Tibial artery (tissue), 4 donors: ENCODE measurements at regions of chr20 and their contacts with region 1.

Region 1: GRCh38 chr20:1965520-1966351 is 28.1 kb downstream of the PDYN start:
- DNase-seq: peak; percentile 71 to 82
- H3K4me3 ChIP-seq: no peak overlapping the region
- H3K27ac ChIP-seq: no peak overlapping the region
- H3K4me1 ChIP-seq: peaks cover 0 to 11% (median 3%) of the 10 kb centered on the region in 4 donors
- H3K27me3 ChIP-seq: peaks cover 0 to 40% of the 10 kb centered on the region in 2 donors
- CTCF ChIP-seq: peak; percentile 84 to 89

Region 2: DNA sequence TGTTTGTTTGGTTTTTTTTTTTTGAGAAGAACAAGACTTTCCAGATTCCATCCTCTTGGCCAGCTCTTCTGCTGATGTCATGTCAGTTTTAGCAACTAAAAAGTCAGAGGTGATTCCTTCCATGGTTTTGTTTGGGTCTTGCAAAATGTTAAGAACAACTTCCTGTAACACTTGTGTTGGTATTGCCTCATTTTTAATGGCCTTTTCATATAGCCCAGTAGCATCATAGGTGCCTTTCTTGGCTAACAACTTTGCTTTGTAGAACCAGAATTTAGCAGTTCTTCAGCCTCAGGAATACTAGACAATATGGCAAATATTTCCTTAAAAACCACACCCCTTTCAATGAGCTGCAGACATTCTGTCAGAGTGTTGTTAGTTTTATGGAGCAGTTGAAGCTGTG is 208.7 kb before region 1 on chr20:
- intact Hi-C with region 1: no loop called
- DNase-seq: no peak
- H3K4me3 ChIP-seq: no peak overlapping the region
- H3K27ac ChIP-seq: no peak overlapping the region
- H3K4me1 ChIP-seq: no peaks in the 10 kb centered on the region
- H3K27me3 ChIP-seq: no peaks in the 10 kb centered on the region
- CTCF ChIP-seq: no peak

Region 3: DNA sequence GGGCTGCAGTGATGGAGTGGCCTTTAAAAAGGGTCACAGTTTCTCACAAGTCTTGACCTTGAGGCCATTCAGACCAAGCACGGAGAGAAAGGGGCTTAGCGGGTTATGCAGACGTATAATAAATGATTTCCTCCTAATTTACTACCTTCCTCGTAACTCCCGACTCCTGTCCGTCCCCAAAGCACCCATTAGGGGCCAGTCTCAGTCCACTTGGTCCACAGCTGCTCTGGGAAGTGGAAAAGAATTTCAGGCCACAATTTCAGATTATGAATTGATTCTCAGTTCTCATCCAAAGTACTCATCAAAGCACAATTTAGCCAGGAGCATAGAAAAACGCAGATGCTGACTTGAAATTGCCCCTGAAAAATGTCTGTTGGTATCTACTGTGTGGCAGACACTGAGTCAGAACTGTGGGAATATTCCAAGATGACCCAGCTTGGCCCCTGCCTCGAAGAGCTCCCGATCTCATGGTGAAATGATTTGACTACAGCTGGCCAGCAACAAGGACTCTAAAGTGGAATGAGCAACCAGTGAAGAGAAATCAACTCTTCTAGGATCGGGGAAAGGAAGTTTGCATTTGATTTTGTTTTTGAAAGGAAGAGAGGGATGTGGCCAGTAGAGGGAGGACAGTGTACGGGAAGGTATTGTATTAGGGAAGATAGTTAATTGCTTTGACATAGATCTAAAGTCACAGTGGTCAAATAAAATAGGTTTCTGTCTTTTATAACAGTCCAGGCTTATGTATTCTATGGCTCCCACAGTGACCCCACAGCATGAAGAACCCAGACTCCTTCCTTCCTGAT is 120.6 kb after region 1 on chr20:
- intact Hi-C with region 1: loop called (anchors 10 kb)
- DNase-seq: no peak
- H3K4me3 ChIP-seq: no peak overlapping the region
- H3K27ac ChIP-seq: no peak overlapping the region
- H3K4me1 ChIP-seq: no peaks in the 10 kb centered on the region
- H3K27me3 ChIP-seq: peaks cover 0 to 35% of the 10 kb centered on the region in 2 donors
- CTCF ChIP-seq: no peak